ENCODE measurements at regions of chr11 and their contacts with region 1.

Region 1: GRCh38 chr11:33863418-33864172 is 28.3 kb downstream of the LMO2 start:
- DNase-seq: no peak
- ATAC-seq: no peak
- H3K4me3 ChIP-seq: no peak overlapping the region
- H3K27ac ChIP-seq: no peak overlapping the region
- H3K4me1 ChIP-seq: no peaks in the 10 kb centered on the region
- H3K27me3 ChIP-seq: peaks cover 86% of the 10 kb centered on the region
- CTCF ChIP-seq: no peak
- POLR2A ChIP-seq: no peak
- RAD21 ChIP-seq: no peak

Region 2: GRCh38 chr11:33303541-33303940 is 560.1 kb before region 1 on chr11:
- CTCF ChIA-PET with region 1: no interaction called
- POLR2A ChIA-PET with region 1: no interaction called
- dilution Hi-C with region 1: no loop called
- in situ Hi-C with region 1: no loop called
- intact Hi-C with region 1: no loop called
- DNase-seq: no peak
- ATAC-seq: no peak
- H3K4me3 ChIP-seq: no peak overlapping the region
- H3K27ac ChIP-seq: no peak overlapping the region
- H3K4me1 ChIP-seq: peaks cover 7% of the 10 kb centered on the region
- H3K27me3 ChIP-seq: no peaks in the 10 kb centered on the region
- CTCF ChIP-seq: no peak
- POLR2A ChIP-seq: no peak
- RAD21 ChIP-seq: no peak

Region 3: GRCh38 chr11:33965032-33965431 is 101.4 kb after region 1 on chr11:
- CTCF ChIA-PET with region 1: no interaction called
- POLR2A ChIA-PET with region 1: no interaction called
- dilution Hi-C with region 1: no loop called
- in situ Hi-C with region 1: loop called (anchors 5 kb)
- intact Hi-C with region 1: no loop called
- DNase-seq: no peak
- ATAC-seq: no peak
- H3K4me3 ChIP-seq: no peak overlapping the region
- H3K27ac ChIP-seq: no peak overlapping the region
- H3K4me1 ChIP-seq: no peaks in the 10 kb centered on the region
- H3K27me3 ChIP-seq: peaks cover 30% of the 10 kb centered on the region
- CTCF ChIP-seq: no peak
- POLR2A ChIP-seq: no peak
- RAD21 ChIP-seq: no peak

Measured in IMR-90 (cell line).